ENCODE measurements at regions of chr7 and their contacts with region 1.

Region 1: DNA sequence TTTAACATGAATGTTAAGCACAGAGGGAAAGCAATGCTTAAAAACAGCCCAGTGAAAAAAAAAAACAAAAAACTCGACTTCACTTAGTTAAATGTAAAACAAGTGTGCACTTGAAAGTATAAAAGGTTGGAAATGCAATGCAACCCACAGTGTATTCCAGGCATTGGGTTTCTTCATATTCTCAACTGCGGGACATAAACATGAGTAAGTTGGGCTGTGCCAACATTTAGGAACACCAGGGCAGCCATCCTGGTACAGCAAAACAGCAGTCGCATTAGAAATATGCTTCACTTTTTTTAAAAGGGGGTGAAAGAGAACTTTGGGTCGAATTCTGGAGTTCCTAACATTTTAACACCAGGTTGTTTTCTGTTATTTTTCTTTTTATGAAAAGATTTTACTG is 937 bp downstream of the STEAP1 start:
- DNase-seq: no peak
- ATAC-seq: no peak

Region 2: DNA sequence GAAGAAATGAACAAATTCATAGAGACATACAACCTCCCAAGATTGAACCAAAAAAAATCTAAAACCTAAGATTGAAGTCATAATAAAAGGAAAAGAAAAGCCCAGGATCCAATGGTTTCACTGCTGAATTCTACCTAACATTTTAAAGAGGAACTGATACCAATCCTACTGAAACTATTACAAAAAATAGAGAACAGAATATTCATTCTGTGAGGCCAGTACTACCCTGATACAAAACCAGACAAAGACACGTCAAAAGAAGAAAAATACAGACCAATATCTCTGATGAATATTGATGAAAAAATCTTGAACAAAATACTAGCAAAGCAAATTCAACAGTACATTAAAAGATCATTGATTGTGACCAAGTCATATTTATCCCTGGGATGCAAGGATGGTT is 129.4 kb before region 1 on chr7:
- intact Hi-C with region 1: no loop called
- DNase-seq: no peak
- ATAC-seq: no peak

Region 3: DNA sequence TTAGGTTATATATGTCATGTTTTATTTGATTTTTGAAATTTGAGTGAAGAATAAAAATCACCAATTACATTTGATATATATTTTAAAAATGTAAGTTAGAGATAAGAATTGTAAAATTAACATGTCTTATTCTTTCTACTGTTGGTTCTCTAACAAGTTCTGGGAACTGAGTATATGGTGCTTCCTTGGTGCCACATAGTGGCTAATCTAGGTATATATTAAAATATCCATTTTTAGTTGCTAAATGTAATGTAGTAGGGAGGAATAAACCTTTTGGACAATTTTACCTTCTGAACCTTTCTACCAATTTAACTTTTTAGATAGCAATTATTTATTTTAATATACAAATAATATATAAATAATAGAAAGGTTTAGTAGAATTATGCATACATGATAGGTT is 107.2 kb after region 1 on chr7:
- intact Hi-C with region 1: loop called (anchors 5 kb)
- DNase-seq: no peak
- ATAC-seq: no peak